GM18951 (cell line): ENCODE measurements at regions of chr3 and their contacts with region 1.

Region 1: DNA sequence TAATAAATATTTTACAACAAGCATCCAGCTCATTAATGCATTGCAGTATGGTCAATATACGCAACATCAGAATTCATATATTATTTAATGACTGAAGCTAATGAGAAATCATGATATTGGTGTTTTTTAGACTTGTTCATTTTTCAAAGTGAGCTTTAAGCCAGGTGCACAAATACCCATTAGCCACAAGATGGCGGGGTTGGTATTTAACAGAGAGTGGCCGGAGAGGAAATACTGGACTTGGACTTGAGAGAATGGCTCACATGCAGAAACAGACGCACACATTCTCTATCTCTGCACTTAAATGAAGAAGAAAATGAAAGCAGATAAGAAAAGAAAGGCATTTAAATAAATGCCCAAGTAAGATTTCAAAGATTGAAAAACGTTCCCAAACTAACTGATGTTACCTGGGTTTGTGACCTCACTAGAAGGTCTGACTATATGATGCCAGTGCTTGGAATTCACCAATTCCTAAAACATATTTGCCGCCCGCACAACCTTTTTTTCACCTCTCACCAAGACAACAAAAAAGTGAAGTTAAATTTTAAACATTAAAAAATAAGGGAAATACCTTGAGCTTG is 21.2 kb upstream of the CRBN start:
- POLR2A ChIP-seq: no peak

Region 2: GRCh38 chr3:2262204-2262603 is 938.5 kb before region 1 on chr3:
- in situ Hi-C with region 1: no loop called
- POLR2A ChIP-seq: no peak

Region 3: GRCh38 chr3:3998140-3998922 is 797.6 kb after region 1 on chr3:
- in situ Hi-C with region 1: loop called (anchors 25 kb)
- POLR2A ChIP-seq: no peak

Region 4: DNA sequence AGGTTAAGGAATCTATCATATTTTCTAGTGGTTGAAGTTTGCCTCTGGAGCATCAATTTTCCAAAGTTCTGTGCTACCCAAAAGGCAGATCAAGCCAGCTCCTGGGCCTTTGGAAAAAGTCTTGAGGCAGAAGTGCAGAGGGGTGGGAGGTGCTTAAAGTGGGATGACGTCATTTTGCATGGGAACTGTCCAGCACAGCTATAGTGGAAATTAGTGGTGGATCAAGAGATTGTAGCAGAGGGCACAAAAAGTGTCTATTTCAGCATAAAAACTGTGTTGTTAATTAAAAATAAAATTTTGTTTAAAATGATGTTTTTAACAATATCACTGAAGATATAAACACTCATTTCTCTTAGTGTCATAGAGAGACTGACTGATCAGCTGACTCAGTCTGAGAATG is 820.4 kb after region 1 on chr3:
- in situ Hi-C with region 1: no loop called
- POLR2A ChIP-seq: no peak

Region 5: GRCh38 chr3:4290272-4290893 is 1089.7 kb after region 1 on chr3:
- in situ Hi-C with region 1: loop called (anchors 25 kb)
- POLR2A ChIP-seq: no peak